ENCODE measurements at regions of chr1 and their contacts with region 1.

Region 1: DNA sequence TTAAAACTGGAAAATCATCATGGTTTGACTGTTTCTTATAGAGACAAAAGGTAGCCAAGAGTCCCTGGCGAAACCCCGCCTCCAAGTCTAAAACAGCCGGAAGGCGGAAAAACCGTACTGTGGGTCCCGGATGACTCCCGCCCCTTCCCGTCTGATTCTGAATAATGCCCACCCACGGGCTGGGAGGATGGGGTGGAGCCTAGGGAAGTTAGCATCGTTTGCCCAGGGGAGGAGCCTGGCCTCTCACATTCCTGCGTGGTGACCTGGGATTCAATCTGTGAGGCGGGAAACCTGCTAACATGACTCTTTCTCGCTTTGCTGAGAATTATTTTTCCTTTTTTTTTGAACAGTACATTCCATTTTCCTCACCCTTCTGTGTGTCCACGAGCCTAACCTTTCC is 124.9 kb downstream of the KCNK1 start:
- DNase-seq: no peak
- ATAC-seq: no peak
- H3K4me3 Mint-ChIP-seq: no peak overlapping the region
- H3K27ac Mint-ChIP-seq: no peak overlapping the region
- H3K4me1 Mint-ChIP-seq: no peaks in the 10 kb centered on the region
- H3K27me3 Mint-ChIP-seq: peaks cover 10% of the 10 kb centered on the region

Region 2: DNA sequence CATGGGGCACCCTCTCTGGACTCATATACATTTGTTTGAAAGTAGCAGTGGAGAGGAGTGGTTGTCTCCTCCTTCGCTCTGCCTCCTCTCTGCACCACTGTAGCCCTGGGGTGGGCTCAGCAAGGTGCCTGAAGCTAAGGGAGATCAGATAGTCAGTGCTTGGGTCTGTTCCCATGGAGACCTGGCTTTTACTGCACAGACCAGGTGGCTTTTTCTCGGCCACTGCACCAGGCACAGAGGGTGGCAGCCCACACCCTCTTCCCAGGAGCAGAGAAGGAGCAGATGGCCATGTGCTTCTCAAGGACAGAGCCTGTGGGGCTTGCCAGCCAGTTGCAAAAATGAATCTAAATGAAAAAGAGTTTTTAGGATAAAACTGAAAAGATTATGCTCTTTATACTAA is 248.4 kb before region 1 on chr1:
- CTCF ChIA-PET with region 1: no interaction called
- POLR2A ChIA-PET with region 1: no interaction called
- intact Hi-C with region 1: no loop called
- DNase-seq: no peak
- ATAC-seq: no peak
- H3K4me3 Mint-ChIP-seq: no peak overlapping the region
- H3K27ac Mint-ChIP-seq: no peak overlapping the region
- H3K4me1 Mint-ChIP-seq: no peaks in the 10 kb centered on the region
- H3K27me3 Mint-ChIP-seq: peaks cover 22% of the 10 kb centered on the region

Region 3: DNA sequence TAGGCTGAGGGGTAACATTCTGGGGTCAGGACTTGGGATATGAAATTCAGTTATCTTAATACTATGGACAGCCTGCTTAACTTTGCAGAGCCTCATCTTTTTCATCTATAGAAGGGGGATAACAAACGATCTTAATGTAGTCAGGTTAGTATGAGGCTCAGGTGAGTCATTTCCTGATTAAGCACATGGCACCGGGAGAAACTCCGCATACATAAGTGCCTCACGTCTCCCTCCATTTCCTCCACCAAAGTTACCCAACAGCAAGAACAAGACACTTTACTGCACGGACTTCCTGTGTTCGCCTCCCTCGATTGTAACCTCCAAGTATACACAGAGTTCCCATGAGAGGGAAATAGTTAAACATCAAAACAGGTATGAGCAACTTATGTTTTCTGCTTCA is 521.7 kb after region 1 on chr1:
- CTCF ChIA-PET with region 1: no interaction called
- POLR2A ChIA-PET with region 1: no interaction called
- intact Hi-C with region 1: loop called in 1 of 2 experiments (anchors 5 kb)
- DNase-seq: peak; percentile 53
- ATAC-seq: peak; percentile 94
- H3K4me3 Mint-ChIP-seq: no peak overlapping the region
- H3K27ac Mint-ChIP-seq: peak overlapping the region; percentile 76
- H3K4me1 Mint-ChIP-seq: peaks cover 22% of the 10 kb centered on the region
- H3K27me3 Mint-ChIP-seq: peaks cover 11% of the 10 kb centered on the region

Region 4: GRCh38 chr1:234933475-234933874 is 1194.6 kb after region 1 on chr1:
- CTCF ChIA-PET with region 1: no interaction called
- POLR2A ChIA-PET with region 1: no interaction called
- intact Hi-C with region 1: no loop called
- DNase-seq: peak; percentile 59
- ATAC-seq: peak; percentile 83
- H3K4me3 Mint-ChIP-seq: no peak overlapping the region
- H3K27ac Mint-ChIP-seq: peak overlapping the region; percentile 82
- H3K4me1 Mint-ChIP-seq: peaks cover 63% of the 10 kb centered on the region
- H3K27me3 Mint-ChIP-seq: no peaks in the 10 kb centered on the region